ENCODE measurements at regions of chr4 and their contacts with region 1.

Region 1: DNA sequence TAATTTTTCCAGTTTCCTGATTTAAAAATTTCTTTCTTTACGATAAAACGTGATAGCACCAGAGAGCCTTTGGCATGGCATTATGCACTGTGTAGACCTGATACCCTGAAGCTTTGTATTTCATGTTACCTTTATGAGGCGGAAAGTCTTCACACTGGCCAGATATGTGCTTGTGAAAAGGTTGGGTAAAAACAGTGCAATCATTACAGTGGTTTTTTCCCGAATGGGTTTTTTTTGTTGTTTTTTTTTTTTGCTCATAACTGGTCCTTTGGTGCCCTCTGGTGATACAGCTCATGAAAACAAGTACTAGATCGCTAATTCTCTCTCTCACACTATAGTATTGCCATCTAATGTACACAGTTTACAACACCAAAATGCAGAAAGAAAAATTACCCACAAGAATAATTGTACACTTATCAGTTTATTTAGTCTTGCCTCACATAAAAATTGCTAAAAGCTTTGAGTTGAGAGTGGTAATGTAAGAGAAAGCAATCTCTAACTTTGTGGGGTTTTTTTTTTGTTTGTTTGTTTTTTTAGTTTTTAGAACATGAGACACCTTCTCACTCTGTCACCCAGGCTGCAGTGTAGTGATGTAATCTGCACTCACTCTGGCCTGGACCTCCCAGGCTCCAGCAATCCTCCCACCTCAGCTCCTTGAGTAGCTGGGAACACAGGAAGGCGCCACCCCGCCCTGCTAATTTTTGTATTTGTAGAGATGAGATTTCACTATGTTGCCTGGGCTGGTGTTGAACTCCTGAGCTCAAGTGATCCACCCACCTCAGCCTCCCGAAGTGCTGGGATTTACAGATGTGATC is 21.3 kb downstream of the SPCS3 start:
- DNase-seq: peak; percentile 69
- H3K4me3 ChIP-seq: no peak overlapping the region
- H3K27ac ChIP-seq: no peak overlapping the region
- H3K4me1 ChIP-seq: peaks cover 7% of the 10 kb centered on the region
- H3K27me3 ChIP-seq: no peaks in the 10 kb centered on the region
- CTCF ChIP-seq: peak; percentile 24 to 42
- POLR2A ChIP-seq: no peak

Region 2: DNA sequence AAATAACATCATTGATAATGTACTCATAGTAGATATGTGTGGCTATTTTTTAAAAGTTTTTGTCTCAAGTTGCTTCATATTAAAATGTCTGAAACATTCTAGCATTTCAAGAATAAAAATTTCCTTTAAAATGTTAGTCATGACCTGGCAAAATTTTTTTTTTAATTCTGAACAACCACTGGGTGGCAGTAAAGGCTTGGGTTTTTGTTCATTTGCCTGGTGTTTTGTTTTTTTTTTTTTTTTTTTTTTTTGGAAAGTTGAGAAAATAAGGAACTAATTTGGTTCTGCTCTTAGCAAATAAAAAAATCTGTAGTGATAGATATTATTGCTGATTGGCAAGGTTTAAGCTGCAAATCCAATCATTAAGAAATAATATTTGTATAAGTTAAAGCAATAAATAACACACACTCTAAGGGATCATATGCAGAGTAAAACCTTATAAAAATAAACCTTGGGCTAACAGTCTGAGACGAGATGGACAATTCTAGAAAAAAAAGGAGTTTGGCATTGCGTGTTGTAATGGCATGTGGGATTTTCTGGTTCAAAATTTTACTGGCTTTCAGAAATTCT is 1976.0 kb before region 1 on chr4:
- CTCF ChIA-PET with region 1: interaction called, 4 read pairs
- POLR2A ChIA-PET with region 1: no interaction called
- dilution Hi-C with region 1: no loop called
- intact Hi-C with region 1: loop called (anchors 2 kb)
- DNase-seq: peak; percentile 18
- H3K4me3 ChIP-seq: no peak overlapping the region
- H3K27ac ChIP-seq: no peak overlapping the region
- H3K4me1 ChIP-seq: no peaks in the 10 kb centered on the region
- H3K27me3 ChIP-seq: no peaks in the 10 kb centered on the region
- CTCF ChIP-seq: peak; percentile 11 to 18
- POLR2A ChIP-seq: no peak

Region 3: GRCh38 chr4:175947117-175947722 is 393.9 kb before region 1 on chr4:
- CTCF ChIA-PET with region 1: interaction called, 18 read pairs
- POLR2A ChIA-PET with region 1: no interaction called
- dilution Hi-C with region 1: no loop called
- intact Hi-C with region 1: loop called (anchors 1 kb)
- DNase-seq: peak; percentile 54
- H3K4me3 ChIP-seq: peak overlapping the region in 1 of 3 experiments; percentile 39
- H3K27ac ChIP-seq: no peak overlapping the region
- H3K4me1 ChIP-seq: peaks cover 3% of the 10 kb centered on the region
- H3K27me3 ChIP-seq: no peaks in the 10 kb centered on the region
- CTCF ChIP-seq: peak; percentile 28 to 37
- POLR2A ChIP-seq: no peak

Region 4: DNA sequence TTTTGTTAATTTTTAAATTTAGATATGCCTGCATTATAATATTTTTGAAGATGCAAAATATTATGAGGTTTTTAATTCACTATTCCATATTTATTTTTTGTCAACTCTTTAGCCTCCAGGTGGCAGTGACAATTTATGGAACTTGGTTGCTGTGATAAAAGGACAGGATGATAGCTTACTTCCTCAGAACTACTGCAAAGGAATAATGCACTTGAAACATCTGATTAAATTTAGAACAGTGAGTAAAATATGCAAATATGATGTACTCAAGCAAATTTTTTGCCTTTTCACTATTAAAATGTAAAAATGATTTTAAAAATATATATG is 190.8 kb before region 1 on chr4:
- CTCF ChIA-PET with region 1: interaction called, 92 read pairs
- POLR2A ChIA-PET with region 1: no interaction called
- dilution Hi-C with region 1: no loop called
- intact Hi-C with region 1: loop called (anchors 1 kb)
- DNase-seq: peak; percentile 20
- H3K4me3 ChIP-seq: no peak overlapping the region
- H3K27ac ChIP-seq: no peak overlapping the region
- H3K4me1 ChIP-seq: no peaks in the 10 kb centered on the region
- H3K27me3 ChIP-seq: no peaks in the 10 kb centered on the region
- CTCF ChIP-seq: no peak
- POLR2A ChIP-seq: no peak

Region 5: GRCh38 chr4:176319704-176320339 is 21.3 kb before region 1 on chr4 and contains the start of gene SPCS3:
- CTCF ChIA-PET with region 1: interaction called, 12 read pairs
- POLR2A ChIA-PET with region 1: no interaction called
- dilution Hi-C with region 1: no loop called
- intact Hi-C with region 1: no loop called
- DNase-seq: peak; percentile 95
- H3K4me3 ChIP-seq: peak within 1 kb of the TSS; percentile 51 to 85 (median 74)
- H3K27ac ChIP-seq: peak within 1 kb of the TSS; percentile 99
- H3K4me1 ChIP-seq: peaks cover 20% of the 10 kb centered on the region
- H3K27me3 ChIP-seq: no peaks in the 10 kb centered on the region
- CTCF ChIP-seq: no peak
- POLR2A ChIP-seq: peak; percentile 95
- total RNA-seq, gene SPCS3: 179 and 183 TPM in 2 replicates

Region 6: GRCh38 chr4:176575141-176575730 is 234.2 kb after region 1 on chr4:
- CTCF ChIA-PET with region 1: no interaction called
- POLR2A ChIA-PET with region 1: no interaction called
- dilution Hi-C with region 1: no loop called
- intact Hi-C with region 1: no loop called
- DNase-seq: no peak
- H3K4me3 ChIP-seq: no peak overlapping the region
- H3K27ac ChIP-seq: no peak overlapping the region
- H3K4me1 ChIP-seq: no peaks in the 10 kb centered on the region
- H3K27me3 ChIP-seq: peaks cover 5 to 9% of the 10 kb centered on the region in 2 experiments
- CTCF ChIP-seq: no peak
- POLR2A ChIP-seq: no peak

Measured in endothelial cell of umbilical vein (primary cell).